A673 (cell line): ENCODE measurements at regions of chr17 and their contacts with region 1.

Region 1: DNA sequence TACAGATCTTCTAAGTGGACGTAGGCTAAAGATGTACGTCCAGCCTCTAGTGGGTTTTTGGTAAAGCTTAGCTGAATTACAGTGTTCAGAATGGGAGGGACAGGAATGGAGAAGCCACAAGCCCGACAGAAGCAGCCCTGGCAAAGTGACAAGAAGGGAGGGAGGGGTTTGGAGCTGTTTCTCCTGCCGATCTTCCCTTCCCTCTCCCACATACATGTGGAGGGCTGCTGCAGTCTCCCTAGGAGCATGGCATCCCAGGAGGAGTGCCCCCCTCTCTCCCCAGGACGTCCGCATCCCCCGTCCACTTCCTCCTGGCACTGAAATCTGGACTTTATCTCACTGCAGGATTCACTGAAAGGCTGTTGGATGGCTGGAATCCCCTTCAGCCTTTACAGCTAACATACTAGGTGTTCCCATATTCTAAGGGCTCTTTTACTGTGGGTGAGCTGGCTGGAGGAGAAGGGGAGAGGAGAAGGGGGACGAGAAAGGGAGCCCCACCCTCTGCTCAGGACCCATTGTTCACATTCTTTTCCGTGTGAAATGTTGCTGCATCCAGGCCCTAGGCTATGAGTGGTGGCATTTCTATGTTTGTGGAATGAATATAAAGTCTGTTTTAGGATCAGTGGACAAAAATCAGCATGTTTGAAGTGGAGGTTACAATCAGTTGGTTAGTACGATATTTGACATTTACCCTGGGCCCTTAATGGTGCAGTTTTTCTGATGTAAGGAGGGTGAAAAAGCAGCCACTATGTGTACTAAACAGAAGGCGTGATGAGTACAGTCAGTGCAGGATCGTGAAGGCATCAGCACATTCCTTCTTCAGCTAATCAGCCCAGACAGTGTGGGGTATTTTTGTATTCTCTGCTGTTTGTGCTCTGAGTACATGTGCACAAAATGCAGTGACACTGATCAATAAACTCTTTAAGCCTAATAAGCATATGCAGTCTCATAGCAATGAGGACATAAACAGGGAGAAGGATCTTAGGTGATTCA is 94.6 kb downstream of the SPECC1 start:
- DNase-seq: no peak
- H3K4me3 ChIP-seq: no peak overlapping the region
- H3K27ac ChIP-seq: no peak overlapping the region
- H3K4me1 ChIP-seq: no peaks in the 10 kb centered on the region
- H3K27me3 ChIP-seq: no peaks in the 10 kb centered on the region
- CTCF ChIP-seq: no peak

Region 2: GRCh38 chr17:20053361-20053964 is 50.3 kb before region 1 on chr17:
- CTCF ChIA-PET with region 1: no interaction called
- POLR2A ChIA-PET with region 1: no interaction called
- intact Hi-C with region 1: loop called (anchors 5 kb)
- DNase-seq: no peak
- H3K4me3 ChIP-seq: no peak overlapping the region
- H3K27ac ChIP-seq: no peak overlapping the region
- H3K4me1 ChIP-seq: no peaks in the 10 kb centered on the region
- H3K27me3 ChIP-seq: no peaks in the 10 kb centered on the region
- CTCF ChIP-seq: no peak

Region 3: DNA sequence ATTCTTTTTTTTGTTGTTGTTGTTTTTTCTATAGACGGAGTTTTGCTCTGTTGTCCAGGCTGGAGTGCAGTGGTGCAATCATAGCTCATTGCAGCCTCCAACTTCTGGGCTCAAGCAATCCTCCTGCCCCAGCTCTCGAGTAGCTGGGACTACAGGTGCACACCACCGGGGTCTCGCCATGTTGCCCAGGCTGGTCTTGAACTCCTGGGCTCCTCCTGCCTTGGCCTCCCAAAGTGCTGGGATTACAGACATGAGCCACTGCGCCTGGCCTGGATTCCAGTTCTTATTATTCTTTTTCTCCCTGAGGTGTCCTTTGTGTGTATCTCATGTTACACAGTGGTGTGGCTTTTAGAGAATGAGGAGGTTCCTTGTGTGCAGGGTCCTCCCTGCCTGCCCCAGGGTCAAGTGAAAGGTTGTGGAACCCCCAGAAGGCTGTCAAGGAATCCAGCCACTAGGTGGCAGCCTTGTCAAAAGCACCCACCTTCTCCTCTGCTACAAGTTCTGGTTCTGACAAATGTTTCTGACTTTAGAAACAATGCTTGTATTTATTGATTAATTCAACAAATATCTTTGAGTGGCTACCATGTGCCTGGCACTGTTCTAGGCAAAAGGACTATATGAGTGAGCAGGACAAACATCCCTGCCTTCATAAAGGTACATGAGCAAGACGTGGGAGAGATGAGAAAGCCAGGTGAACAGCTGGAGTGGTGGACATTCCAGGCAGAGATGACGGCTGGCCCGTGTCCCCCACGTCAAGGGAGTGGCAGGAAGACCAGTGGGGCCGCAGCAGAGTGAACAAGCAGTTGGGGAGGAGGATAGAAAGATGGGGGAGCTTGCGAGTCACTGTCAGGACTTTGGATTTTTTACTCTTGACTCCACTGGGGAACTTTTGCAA is 17.9 kb after region 1 on chr17:
- CTCF ChIA-PET with region 1: no interaction called
- POLR2A ChIA-PET with region 1: no interaction called
- intact Hi-C with region 1: no loop called
- DNase-seq: peak; percentile 53
- H3K4me3 ChIP-seq: no peak overlapping the region
- H3K27ac ChIP-seq: no peak overlapping the region
- H3K4me1 ChIP-seq: no peaks in the 10 kb centered on the region
- H3K27me3 ChIP-seq: no peaks in the 10 kb centered on the region
- CTCF ChIP-seq: peak; percentile 96